ENCODE measurements at regions of chr6 and their contacts with region 1.

Region 1: GRCh38 chr6:138307816-138308728 is 69.6 kb upstream of the SMIM28 start:
- DNase-seq: no peak
- H3K4me3 ChIP-seq: no peak overlapping the region
- H3K27ac ChIP-seq: no peak overlapping the region
- H3K4me1 ChIP-seq: no peaks in the 10 kb centered on the region
- H3K27me3 ChIP-seq: no peaks in the 10 kb centered on the region
- CTCF ChIP-seq: no peak
- EP300 ChIP-seq: no peak
- POLR2A ChIP-seq: no peak
- RAD21 ChIP-seq: no peak

Region 2: DNA sequence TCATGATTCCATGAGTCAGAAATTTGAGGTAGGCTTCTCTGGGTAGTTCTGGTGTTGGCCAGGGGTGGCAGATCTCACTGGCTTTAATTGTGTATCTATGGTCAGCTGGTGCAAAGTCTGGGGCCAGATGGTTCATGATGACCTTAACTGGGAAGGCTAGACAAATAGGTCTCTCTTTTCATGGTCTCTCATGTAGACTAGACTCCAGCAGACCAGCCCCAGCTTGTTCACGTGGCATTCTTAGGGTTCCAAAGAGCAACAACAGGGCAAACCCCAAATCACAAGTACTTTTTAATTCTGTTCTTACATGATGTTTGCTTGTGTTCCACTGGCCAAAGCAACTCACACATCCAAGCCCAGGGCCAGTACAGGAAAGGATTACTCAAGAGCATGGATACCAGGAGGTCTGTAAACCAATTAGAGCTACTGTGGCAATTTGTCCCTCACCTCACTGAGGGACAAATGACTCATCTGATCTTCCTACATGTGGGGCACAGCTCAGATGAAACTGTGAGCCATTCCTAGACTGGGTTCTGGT is 10.2 kb before region 1 on chr6:
- CTCF ChIA-PET with region 1: interaction called, 12 read pairs
- POLR2A ChIA-PET with region 1: no interaction called
- DNase-seq: no peak
- H3K4me3 ChIP-seq: no peak overlapping the region
- H3K27ac ChIP-seq: no peak overlapping the region
- H3K4me1 ChIP-seq: no peaks in the 10 kb centered on the region
- H3K27me3 ChIP-seq: no peaks in the 10 kb centered on the region
- CTCF ChIP-seq: no peak
- EP300 ChIP-seq: no peak
- POLR2A ChIP-seq: no peak
- RAD21 ChIP-seq: no peak